ENCODE measurements at regions of chr17 and their contacts with region 1.

Region 1: GRCh38 chr17:56085588-56086267 is 67.5 kb upstream of the ANKFN1 start:
- DNase-seq: no peak
- H3K4me3 ChIP-seq: no peak overlapping the region
- H3K27ac ChIP-seq: no peak overlapping the region
- H3K4me1 ChIP-seq: no peaks in the 10 kb centered on the region
- H3K27me3 ChIP-seq: no peaks in the 10 kb centered on the region
- CTCF ChIP-seq: no peak
- POLR2A ChIP-seq: no peak

Region 2: GRCh38 chr17:56096026-56096810 is 10.5 kb after region 1 on chr17:
- intact Hi-C with region 1: loop called in 1 of 2 experiments (anchors 2 kb)
- DNase-seq: no peak
- H3K4me3 ChIP-seq: no peak overlapping the region
- H3K27ac ChIP-seq: no peak overlapping the region
- H3K4me1 ChIP-seq: no peaks in the 10 kb centered on the region
- H3K27me3 ChIP-seq: no peaks in the 10 kb centered on the region
- CTCF ChIP-seq: no peak
- POLR2A ChIP-seq: no peak

Measured in adrenal gland (tissue), 19 donors.